GM10248 (cell line): ENCODE measurements at regions of chr1 and their contacts with region 1.

Region 1: DNA sequence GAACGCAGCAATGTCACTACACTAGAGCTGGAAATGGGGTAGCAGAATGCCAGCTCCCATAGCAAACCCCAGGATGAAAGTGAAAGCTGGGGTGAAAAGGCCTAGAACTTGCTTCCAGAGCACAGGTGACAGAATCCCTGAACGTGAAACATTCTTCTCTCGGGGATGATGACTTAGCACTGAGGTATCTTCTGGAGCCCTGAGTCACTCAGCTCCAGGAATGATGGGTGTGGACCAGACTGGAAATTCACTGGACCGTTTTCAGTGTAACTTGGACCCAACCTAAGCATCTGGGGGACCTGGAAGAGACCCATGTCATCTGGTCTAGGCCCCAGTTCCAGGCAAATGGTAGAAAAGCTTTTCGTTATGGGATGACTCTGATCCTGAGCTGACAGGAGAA is 108.9 kb downstream of the CDC7 start:
- DNase-seq: no peak
- CTCF ChIP-seq: no peak

Region 2: GRCh38 chr1:91699339-91699974 is 89.9 kb after region 1 on chr1:
- CTCF ChIA-PET with region 1: no interaction called
- POLR2A ChIA-PET with region 1: interaction called, 11 read pairs
- DNase-seq: no peak
- CTCF ChIP-seq: no peak